ENCODE measurements at regions of chr17 and their contacts with region 1.

Region 1: GRCh38 chr17:45218895-45219661 is 2.6 kb upstream of the FMNL1 start:
- DNase-seq: peak; percentile 88
- H3K4me3 Mint-ChIP-seq: peak overlapping the region; percentile 85
- H3K27ac Mint-ChIP-seq: peak overlapping the region; percentile 82
- H3K4me1 Mint-ChIP-seq: peaks cover 38% of the 10 kb centered on the region
- H3K27me3 Mint-ChIP-seq: no peaks in the 10 kb centered on the region

Region 2: GRCh38 chr17:45110668-45111611 is 108.1 kb before region 1 on chr17:
- CTCF ChIA-PET with region 1: no interaction called
- POLR2A ChIA-PET with region 1: no interaction called
- DNase-seq: no peak
- H3K4me3 Mint-ChIP-seq: no peak overlapping the region
- H3K27ac Mint-ChIP-seq: no peak overlapping the region
- H3K4me1 Mint-ChIP-seq: no peaks in the 10 kb centered on the region
- H3K27me3 Mint-ChIP-seq: no peaks in the 10 kb centered on the region

Region 3: DNA sequence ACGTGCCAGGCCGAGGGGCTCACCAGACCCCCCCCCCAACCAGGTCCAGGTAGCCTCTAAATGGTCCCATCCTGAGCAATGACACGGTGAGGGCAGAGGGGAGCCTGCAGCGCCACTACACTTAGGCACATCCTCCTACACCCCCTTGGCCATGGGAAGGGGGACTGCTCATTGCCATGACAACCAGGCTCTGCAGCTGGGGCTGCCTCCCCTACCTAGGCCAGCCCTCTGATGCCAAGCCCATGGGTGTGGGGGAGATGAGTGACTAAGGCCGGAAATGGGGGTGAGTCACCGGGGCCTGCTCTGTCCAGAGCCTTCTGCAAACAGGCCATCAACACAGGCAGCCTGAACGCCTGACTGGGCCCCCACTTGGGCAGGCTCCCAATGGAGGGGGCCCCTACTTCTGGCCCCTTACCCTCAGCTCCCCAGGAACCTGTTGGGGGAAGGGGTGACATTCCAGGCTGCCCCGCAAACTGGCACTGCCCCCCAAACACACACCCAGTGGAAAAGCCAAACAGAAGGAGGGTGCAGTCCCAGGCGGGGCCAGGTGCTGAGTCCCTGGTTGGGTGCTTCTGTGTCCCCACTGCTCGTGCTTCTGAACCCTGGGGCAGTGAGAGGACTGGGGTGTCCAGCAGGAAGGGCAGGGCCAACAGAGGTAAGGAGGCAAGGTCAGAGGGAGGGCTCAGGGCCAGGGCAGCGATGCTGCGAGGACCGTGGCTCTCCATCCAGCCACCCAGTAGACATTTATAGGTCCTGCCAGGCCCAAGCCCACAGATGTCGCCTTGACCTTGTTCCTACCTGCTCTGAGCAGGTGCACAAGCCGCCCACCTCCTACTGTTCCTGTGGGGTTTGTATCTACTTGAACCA is 94.9 kb before region 1 on chr17:
- CTCF ChIA-PET with region 1: no interaction called
- POLR2A ChIA-PET with region 1: no interaction called
- DNase-seq: no peak
- H3K4me3 Mint-ChIP-seq: no peak overlapping the region
- H3K27ac Mint-ChIP-seq: no peak overlapping the region
- H3K4me1 Mint-ChIP-seq: no peaks in the 10 kb centered on the region
- H3K27me3 Mint-ChIP-seq: peaks cover 7% of the 10 kb centered on the region

Region 4: DNA sequence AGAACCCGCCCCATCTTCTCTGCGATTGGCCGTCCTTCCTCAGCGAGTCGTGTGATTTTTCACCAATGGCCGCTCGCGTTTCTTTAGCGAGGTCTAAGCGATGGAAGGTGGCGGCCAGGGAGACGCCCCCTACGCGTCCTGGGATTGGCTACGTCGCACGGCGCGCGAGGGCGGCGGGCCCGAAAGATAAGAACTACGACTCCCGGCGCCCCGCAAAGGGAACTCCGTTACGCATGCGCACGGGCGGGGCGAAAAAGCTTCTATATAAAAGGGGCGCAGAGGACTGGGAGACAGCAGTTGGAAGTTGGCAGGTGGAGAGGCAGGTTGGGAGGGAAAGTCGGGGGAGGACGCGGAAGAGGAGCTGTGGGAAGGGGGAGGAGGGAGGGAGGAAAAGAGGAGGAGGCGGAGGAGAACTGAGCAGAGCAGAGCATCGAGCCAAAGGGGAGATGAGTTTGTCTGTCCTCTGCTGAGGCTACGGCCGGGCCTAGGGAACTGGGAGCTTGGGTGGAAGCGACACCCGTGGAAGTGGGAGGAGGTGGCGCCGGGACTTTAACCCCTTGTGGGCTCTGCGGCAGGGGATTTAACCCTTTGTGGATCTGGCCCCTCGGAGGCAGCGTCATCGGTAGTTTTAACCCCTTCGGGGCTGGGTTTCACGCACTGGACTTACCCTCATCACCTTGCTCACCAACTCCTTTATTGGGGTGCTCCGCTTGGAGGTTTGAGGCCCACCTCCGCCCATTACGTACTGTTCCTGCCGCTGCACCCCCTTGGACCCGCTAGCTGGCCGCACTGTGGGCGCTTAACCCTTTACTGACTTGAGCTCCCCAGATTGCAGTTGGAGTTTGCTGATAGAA is 70.7 kb before region 1 on chr17 and contains the start of gene HEXIM1:
- CTCF ChIA-PET with region 1: interaction called, 21 read pairs
- POLR2A ChIA-PET with region 1: interaction called, 3 read pairs
- DNase-seq: peak; percentile 99
- H3K4me3 Mint-ChIP-seq: peak within 1 kb of the TSS; percentile 98
- H3K27ac Mint-ChIP-seq: peak within 1 kb of the TSS; percentile 100
- H3K4me1 Mint-ChIP-seq: peaks cover 56% of the 10 kb centered on the region
- H3K27me3 Mint-ChIP-seq: no peaks in the 10 kb centered on the region
- total RNA-seq, gene HEXIM1: 30.5 TPM

Region 5: GRCh38 chr17:45235416-45236281 is 16.6 kb after region 1 on chr17:
- CTCF ChIA-PET with region 1: interaction called, 64 read pairs
- POLR2A ChIA-PET with region 1: no interaction called
- DNase-seq: peak; percentile 84
- H3K4me3 Mint-ChIP-seq: no peak overlapping the region
- H3K27ac Mint-ChIP-seq: peak overlapping the region; percentile 83
- H3K4me1 Mint-ChIP-seq: peaks cover 62% of the 10 kb centered on the region
- H3K27me3 Mint-ChIP-seq: no peaks in the 10 kb centered on the region

Region 6: DNA sequence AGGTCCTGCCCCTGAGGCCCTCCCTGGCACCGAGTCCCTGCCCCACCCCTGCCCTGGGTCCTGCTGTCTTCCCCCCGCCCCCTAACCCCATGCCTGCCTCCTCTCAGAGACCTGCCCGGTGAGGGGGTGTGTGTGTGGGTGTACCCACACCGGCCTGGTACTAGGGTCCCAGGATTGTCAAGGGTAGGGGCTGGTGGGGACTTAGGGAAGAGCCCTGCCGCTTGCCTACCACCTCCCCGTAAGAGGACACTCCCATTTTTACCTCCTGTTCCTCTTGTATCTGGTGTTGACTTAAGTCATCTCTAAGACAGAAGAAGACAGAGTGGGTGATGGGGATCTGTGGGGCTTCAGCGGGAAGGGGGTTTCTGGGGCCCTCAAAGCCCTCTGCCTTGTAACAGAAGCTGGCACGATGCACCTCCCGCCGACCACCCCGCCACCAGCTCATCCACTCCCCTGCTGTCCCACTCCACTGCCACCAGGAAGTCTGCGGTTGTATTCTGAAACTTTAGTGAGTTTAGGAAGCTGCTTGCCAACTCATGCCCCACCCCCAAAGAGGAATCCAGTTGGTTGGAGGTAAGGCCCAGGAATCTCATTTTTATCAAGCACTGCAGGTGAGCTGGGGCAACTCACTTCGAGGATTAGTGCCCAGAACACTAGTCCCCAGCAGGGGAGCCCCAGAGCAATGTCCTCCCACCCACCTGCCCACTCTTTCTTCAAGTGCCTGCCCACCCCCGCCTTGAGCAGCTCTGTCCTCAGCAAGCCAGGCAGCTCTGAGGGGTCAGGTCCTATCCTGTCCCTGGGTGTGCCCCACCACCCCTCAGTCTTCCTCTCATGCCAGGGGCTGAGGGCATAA is 37.3 kb after region 1 on chr17:
- CTCF ChIA-PET with region 1: interaction called, 21 read pairs
- POLR2A ChIA-PET with region 1: no interaction called
- DNase-seq: peak; percentile 26
- H3K4me3 Mint-ChIP-seq: no peak overlapping the region
- H3K27ac Mint-ChIP-seq: peak overlapping the region; percentile 75
- H3K4me1 Mint-ChIP-seq: peaks cover 54% of the 10 kb centered on the region
- H3K27me3 Mint-ChIP-seq: no peaks in the 10 kb centered on the region

Region 7: DNA sequence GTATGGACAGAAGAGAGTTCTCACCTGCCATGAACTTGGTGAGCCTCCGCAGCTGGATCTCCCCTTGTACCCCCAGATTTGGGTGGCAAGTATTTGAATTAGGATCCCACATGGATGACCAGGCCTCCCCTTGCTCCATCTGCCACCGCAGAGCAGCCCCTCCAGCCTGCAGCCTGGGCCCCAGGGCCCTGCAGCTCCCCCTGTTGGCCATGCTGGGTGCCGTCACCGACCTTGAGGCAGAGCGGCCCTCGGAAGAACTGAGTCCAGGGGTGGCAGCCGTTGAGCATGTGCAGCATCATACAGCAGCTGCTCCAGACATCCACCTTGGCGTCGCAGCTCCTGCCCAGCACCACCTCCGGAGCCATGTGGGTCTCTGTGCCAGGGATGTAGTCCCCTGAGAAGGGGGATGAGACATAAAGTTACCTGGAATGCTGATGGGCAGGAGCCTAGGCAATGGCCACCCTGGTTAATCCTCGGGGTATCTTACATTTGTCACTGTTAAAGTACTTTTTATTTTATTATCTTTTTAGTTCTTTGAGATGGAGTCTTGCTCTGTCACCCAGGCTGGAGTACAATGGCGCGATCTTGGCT is 51.8 kb after region 1 on chr17:
- CTCF ChIA-PET with region 1: interaction called, 22 read pairs
- POLR2A ChIA-PET with region 1: no interaction called
- DNase-seq: peak; percentile 58
- H3K4me3 Mint-ChIP-seq: no peak overlapping the region
- H3K27ac Mint-ChIP-seq: no peak overlapping the region
- H3K4me1 Mint-ChIP-seq: no peaks in the 10 kb centered on the region
- H3K27me3 Mint-ChIP-seq: no peaks in the 10 kb centered on the region

Region 8: DNA sequence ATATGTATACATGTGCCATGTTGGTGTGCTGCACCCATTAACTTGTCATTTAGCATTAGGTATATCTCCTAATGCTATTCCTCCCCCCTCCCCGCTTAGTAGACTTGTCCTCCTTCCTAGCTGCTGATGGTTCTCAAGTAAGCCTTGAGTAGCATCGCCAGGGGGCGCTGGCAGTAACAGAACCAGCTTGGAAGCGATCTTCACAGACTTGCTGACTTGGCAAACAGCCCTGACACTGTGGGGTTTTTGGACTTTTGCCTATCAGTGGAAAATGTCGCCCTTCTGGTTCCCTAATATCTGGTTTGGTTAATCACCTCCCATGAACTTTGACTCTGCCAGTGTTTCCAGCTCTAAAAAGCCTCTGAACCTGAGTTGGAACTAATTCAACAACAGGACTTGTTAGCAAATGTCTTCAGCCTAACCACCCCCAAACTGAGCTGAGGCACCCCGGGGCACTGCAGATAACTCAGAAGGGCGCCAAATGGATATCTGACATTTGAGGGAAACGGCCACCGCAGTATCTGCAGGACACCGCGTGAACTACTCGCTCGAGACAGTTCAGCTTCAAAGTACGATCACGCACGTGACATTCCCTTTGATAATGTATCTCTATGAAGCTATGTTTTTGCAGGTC is 58.3 kb after region 1 on chr17:
- CTCF ChIA-PET with region 1: interaction called, 22 read pairs
- POLR2A ChIA-PET with region 1: no interaction called
- DNase-seq: peak; percentile 93
- H3K4me3 Mint-ChIP-seq: no peak overlapping the region
- H3K27ac Mint-ChIP-seq: peak overlapping the region; percentile 11
- H3K4me1 Mint-ChIP-seq: peaks cover 22% of the 10 kb centered on the region
- H3K27me3 Mint-ChIP-seq: no peaks in the 10 kb centered on the region

Region 9: GRCh38 chr17:45385331-45385997 is 166.4 kb after region 1 on chr17:
- CTCF ChIA-PET with region 1: interaction called, 22 read pairs
- POLR2A ChIA-PET with region 1: no interaction called
- DNase-seq: peak; percentile 91
- H3K4me3 Mint-ChIP-seq: no peak overlapping the region
- H3K27ac Mint-ChIP-seq: peak overlapping the region; percentile 80
- H3K4me1 Mint-ChIP-seq: peaks cover 20% of the 10 kb centered on the region
- H3K27me3 Mint-ChIP-seq: peaks cover 14% of the 10 kb centered on the region

Measured in activated CD4-positive, alpha-beta T cell treated with anti-CD3 and anti-CD28 coated beads, Interleukin-2, amount 10 ng/mL, durations not matched to agents 7 days and 5 days (primary cell).